ENCODE measurements at regions of chr14 and their contacts with region 1.

Region 1: GRCh38 chr14:64764641-64765520 is 60.7 kb downstream of the PLEKHG3 start:
- DNase-seq: peak; percentile 84
- ATAC-seq: peak; percentile 74

Region 2: DNA sequence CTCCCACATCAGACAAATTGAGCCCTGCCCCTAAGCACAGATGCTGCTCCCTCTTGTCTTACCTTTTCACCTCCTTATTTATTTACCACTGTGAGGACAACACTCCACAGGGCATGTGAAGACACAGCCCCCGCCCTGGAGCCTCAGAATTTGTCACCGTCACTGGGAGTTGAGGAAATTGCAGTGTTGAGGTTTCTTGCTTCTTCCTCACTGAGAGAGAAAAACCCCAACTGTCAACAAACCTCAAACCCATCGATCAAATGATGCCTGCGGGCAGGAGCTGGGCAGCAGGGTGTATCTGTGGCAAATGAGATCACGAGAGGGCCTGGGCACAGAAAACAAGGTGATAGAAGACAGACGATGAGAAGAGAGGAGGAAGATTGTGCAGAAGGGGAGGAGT is 91.1 kb before region 1 on chr14:
- intact Hi-C with region 1: loop called (anchors 2 kb)
- DNase-seq: peak; percentile 53
- ATAC-seq: no peak